Naive thymus-derived CD8-positive, alpha-beta T cell (primary cell): ENCODE measurements at regions of chr3 and their contacts with region 1.

Region 1: GRCh38 chr3:128123538-128124368 is at the start of gene RUVBL1:
- DNase-seq: peak; percentile 87 to 99 (median 97)
- ATAC-seq: peak; percentile 95 to 97
- H3K4me3 Mint-ChIP-seq: peak within 1 kb of the TSS; percentile 91 to 100 (median 97)
- H3K27ac Mint-ChIP-seq: peak within 1 kb of the TSS; percentile 85 to 100 (median 97)
- H3K4me1 Mint-ChIP-seq: peaks cover 20 to 32% (median 30%) of the 10 kb centered on the region in 4 donors
- H3K27me3 Mint-ChIP-seq: no peaks in the 10 kb centered on the region
- polyA plus RNA-seq, gene RUVBL1: 49.5 to 66.6 (median 65.2) TPM

Region 2: DNA sequence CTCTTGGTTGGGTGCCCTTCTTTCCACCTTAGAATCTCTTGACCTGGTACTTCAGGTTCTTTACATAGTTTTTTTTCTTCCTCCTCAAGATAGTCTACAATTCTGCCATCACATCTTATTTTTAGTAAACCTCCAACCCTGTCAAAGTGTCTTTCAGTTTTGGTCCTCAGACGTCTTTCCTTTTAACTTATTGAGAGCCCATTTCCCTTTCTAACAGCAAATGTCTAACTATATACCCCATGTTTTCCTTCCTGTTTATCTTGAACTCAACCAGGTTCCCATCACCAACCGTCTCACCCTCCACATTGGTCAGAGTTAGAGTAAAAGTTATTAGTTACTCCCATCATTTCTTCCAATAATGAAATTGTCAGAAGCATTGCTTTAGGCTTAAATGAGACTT is 198.4 kb before region 1 on chr3:
- POLR2A ChIA-PET with region 1: no interaction called
- DNase-seq: no peak
- ATAC-seq: no peak
- H3K4me3 Mint-ChIP-seq: no peak overlapping the region
- H3K27ac Mint-ChIP-seq: no peak overlapping the region
- H3K4me1 Mint-ChIP-seq: peaks cover 2 to 12% (median 9%) of the 10 kb centered on the region in 4 donors
- H3K27me3 Mint-ChIP-seq: peaks cover 4 to 9% (median 7%) of the 10 kb centered on the region in 5 donors

Region 3: GRCh38 chr3:128112357-128112968 is 11.3 kb before region 1 on chr3:
- POLR2A ChIA-PET with region 1: interaction called, 16 read pairs
- DNase-seq: peak in 7 of 10 donors; percentile 7 to 52 (median 32)
- ATAC-seq: peak; percentile 96 to 98
- H3K4me3 Mint-ChIP-seq: peak overlapping the region in 9 of 10 donors; percentile 15 to 80 (median 50)
- H3K27ac Mint-ChIP-seq: peak overlapping the region; percentile 80 to 96 (median 90)
- H3K4me1 Mint-ChIP-seq: peaks cover 18 to 45% (median 41%) of the 10 kb centered on the region in 4 donors
- H3K27me3 Mint-ChIP-seq: no peaks in the 10 kb centered on the region

Region 4: GRCh38 chr3:128153156-128154041 is 29.6 kb after region 1 on chr3 and contains the start of gene EEFSEC:
- POLR2A ChIA-PET with region 1: interaction called, 70 read pairs
- DNase-seq: peak; percentile 69 to 90 (median 82)
- ATAC-seq: peak; percentile 88 to 90
- H3K4me3 Mint-ChIP-seq: peak within 1 kb of the TSS; percentile 81 to 94 (median 92)
- H3K27ac Mint-ChIP-seq: peak within 1 kb of the TSS; percentile 91 to 100 (median 96)
- H3K4me1 Mint-ChIP-seq: peaks cover 24 to 49% (median 35%) of the 10 kb centered on the region in 4 donors
- H3K27me3 Mint-ChIP-seq: peaks cover 0 to 3% (median 0%) of the 10 kb centered on the region in 5 donors
- polyA plus RNA-seq, gene EEFSEC: 14.7 to 27.1 (median 24.3) TPM